Left lung (tissue), 14 donors: ENCODE measurements at regions of chr2 and their contacts with region 1.

Region 1: DNA sequence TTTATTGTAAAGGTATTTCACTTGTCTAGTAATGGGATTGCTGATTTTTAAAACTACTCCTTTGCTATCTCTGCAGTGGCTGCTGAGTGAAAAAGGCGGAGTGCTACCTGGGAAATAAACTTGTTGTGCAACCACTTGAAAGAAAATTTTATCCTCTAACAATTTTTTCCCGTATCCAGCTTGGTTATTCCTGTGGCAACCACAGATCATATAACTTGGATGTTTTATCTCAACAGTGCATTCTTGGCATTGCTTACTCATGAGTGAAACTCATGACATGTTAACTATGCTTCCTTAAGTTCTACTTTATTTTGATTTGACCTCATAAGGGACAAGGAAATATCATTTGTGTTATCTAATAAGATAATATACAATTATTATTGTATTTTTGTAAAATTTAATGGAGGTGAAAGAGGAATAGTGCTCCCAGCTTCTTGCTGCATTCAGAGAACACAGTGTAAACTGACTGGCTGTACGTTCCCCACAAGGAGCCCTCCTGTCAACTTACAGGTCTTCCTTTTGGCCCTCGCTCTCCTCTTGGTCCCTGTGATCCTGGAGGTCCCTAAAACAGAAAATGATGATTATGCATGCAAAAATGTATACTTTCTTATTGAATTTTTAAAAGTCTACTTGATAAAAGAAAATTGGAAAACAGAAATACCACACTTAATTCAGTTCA is 82.7 kb downstream of the COL5A2 start:
- DNase-seq: no peak
- ATAC-seq: peak; percentile 13
- H3K4me3 ChIP-seq: no peak overlapping the region
- H3K27ac ChIP-seq: peak overlapping the region in 1 of 2 donors; percentile 21
- H3K4me1 ChIP-seq: peaks cover 0 to 7% of the 10 kb centered on the region in 2 donors
- H3K27me3 ChIP-seq: no peaks in the 10 kb centered on the region
- CTCF ChIP-seq: no peak

Region 2: GRCh38 chr2:189287982-189288521 is 191.1 kb after region 1 on chr2:
- intact Hi-C with region 1: loop called in 1 of 2 experiments (anchors 10 kb)
- DNase-seq: peak in 2 of 4 donors; percentile 42 to 69
- ATAC-seq: peak; percentile 83
- H3K4me3 ChIP-seq: no peak overlapping the region
- H3K27ac ChIP-seq: no peak overlapping the region
- H3K4me1 ChIP-seq: peaks cover 0 to 6% of the 10 kb centered on the region in 2 donors
- H3K27me3 ChIP-seq: no peaks in the 10 kb centered on the region
- CTCF ChIP-seq: peak; percentile 26 to 37